ENCODE measurements at regions of chr1 and their contacts with region 1.

Region 1: DNA sequence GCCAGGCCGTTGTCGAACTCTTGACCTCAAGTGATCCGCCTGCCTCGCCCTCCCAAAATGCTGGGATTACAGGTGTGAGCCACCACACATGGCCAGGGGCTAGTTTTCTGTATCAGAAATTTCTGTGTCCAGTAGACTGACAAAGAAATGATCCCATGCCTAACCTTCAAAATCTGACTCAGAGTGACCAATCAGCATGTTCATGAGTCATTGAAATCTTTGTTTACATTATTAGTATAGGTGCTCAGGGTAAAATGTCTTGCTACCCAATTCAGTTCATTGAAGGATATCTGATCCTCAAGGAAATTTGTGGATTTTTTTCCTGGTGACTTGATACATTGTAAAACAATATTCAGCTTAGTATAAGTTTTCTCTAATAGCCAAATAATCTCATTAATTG is 11.0 kb upstream of the LDLRAD2 start:
- DNase-seq: no peak
- H3K4me3 ChIP-seq: no peak overlapping the region
- H3K4me3 Mint-ChIP-seq: no peak overlapping the region
- H3K27ac ChIP-seq: no peak overlapping the region
- H3K27ac Mint-ChIP-seq: no peak overlapping the region
- H3K4me1 ChIP-seq: no peaks in the 10 kb centered on the region
- H3K4me1 Mint-ChIP-seq: no peaks in the 10 kb centered on the region
- H3K27me3 ChIP-seq: no peaks in the 10 kb centered on the region
- H3K27me3 Mint-ChIP-seq: peaks cover 4 to 6% of the 10 kb centered on the region in 2 donors

Region 2: GRCh38 chr1:21742578-21742977 is 58.5 kb before region 1 on chr1:
- CTCF ChIA-PET with region 1: no interaction called
- POLR2A ChIA-PET with region 1: interaction called, 12 read pairs
- DNase-seq: no peak
- H3K4me3 ChIP-seq: no peak overlapping the region
- H3K4me3 Mint-ChIP-seq: no peak overlapping the region
- H3K27ac ChIP-seq: no peak overlapping the region
- H3K27ac Mint-ChIP-seq: peak overlapping the region in 1 of 8 donors; percentile 38
- H3K4me1 ChIP-seq: no peaks in the 10 kb centered on the region
- H3K4me1 Mint-ChIP-seq: peaks cover 14 to 21% (median 19%) of the 10 kb centered on the region in 3 donors
- H3K27me3 ChIP-seq: no peaks in the 10 kb centered on the region
- H3K27me3 Mint-ChIP-seq: no peaks in the 10 kb centered on the region

Region 3: GRCh38 chr1:21764615-21765423 is 36.3 kb before region 1 on chr1:
- CTCF ChIA-PET with region 1: no interaction called
- POLR2A ChIA-PET with region 1: no interaction called
- DNase-seq: no peak
- H3K4me3 ChIP-seq: no peak overlapping the region
- H3K4me3 Mint-ChIP-seq: no peak overlapping the region
- H3K27ac ChIP-seq: no peak overlapping the region
- H3K27ac Mint-ChIP-seq: peak overlapping the region in 2 of 8 donors; percentile 54 to 78
- H3K4me1 ChIP-seq: peaks cover 31% of the 10 kb centered on the region
- H3K4me1 Mint-ChIP-seq: peaks cover 45 to 77% (median 64%) of the 10 kb centered on the region in 3 donors
- H3K27me3 ChIP-seq: no peaks in the 10 kb centered on the region
- H3K27me3 Mint-ChIP-seq: no peaks in the 10 kb centered on the region

Measured in CD8-positive, alpha-beta memory T cell (primary cell).